Heart left ventricle (tissue), 16 donors: ENCODE measurements at regions of chr12 and their contacts with region 1.

Region 1: GRCh38 chr12:81128930-81129554 is 51.2 kb downstream of the ACSS3 start:
- DNase-seq: peak in 2 of 5 donors; percentile 7 to 24
- ATAC-seq: peak in 3 of 4 donors; percentile 48 to 76 (median 65)
- H3K4me3 ChIP-seq: no peak overlapping the region
- H3K27ac ChIP-seq: no peak overlapping the region
- H3K4me1 ChIP-seq: peaks cover 0 to 5% (median 0%) of the 10 kb centered on the region in 12 donors
- H3K27me3 ChIP-seq: no peaks in the 10 kb centered on the region
- CTCF ChIP-seq: peak; percentile 46 to 75 (median 66)
- POLR2A ChIP-seq: no peak

Region 2: GRCh38 chr12:80412369-80412953 is 716.6 kb before region 1 on chr12:
- intact Hi-C with region 1: loop called in 2 of 10 experiments (anchors 5 to 10 kb)
- DNase-seq: no peak
- ATAC-seq: peak in 1 of 4 donors; percentile 58
- H3K4me3 ChIP-seq: no peak overlapping the region
- H3K27ac ChIP-seq: no peak overlapping the region
- H3K4me1 ChIP-seq: no peaks in the 10 kb centered on the region
- H3K27me3 ChIP-seq: no peaks in the 10 kb centered on the region
- CTCF ChIP-seq: peak; percentile 57 to 80 (median 74)
- POLR2A ChIP-seq: no peak

Region 3: GRCh38 chr12:80837348-80837985 is 291.6 kb before region 1 on chr12:
- intact Hi-C with region 1: loop called in 1 of 10 experiments (anchors 10 kb)
- DNase-seq: peak in 1 of 5 donors; percentile 20
- ATAC-seq: peak; percentile 71 to 94 (median 79)
- H3K4me3 ChIP-seq: no peak overlapping the region
- H3K27ac ChIP-seq: peak overlapping the region in 1 of 12 donors; percentile 32
- H3K4me1 ChIP-seq: peaks cover 0 to 21% (median 7%) of the 10 kb centered on the region in 12 donors
- H3K27me3 ChIP-seq: no peaks in the 10 kb centered on the region
- CTCF ChIP-seq: peak; percentile 51 to 78 (median 68)
- POLR2A ChIP-seq: no peak

Region 4: GRCh38 chr12:80925234-80925633 is 203.8 kb before region 1 on chr12:
- intact Hi-C with region 1: no loop called
- DNase-seq: no peak
- ATAC-seq: peak; percentile 63 to 82 (median 73)
- H3K4me3 ChIP-seq: no peak overlapping the region
- H3K27ac ChIP-seq: peak overlapping the region in 6 of 12 donors; percentile 0 to 34 (median 10)
- H3K4me1 ChIP-seq: peaks cover 0 to 29% (median 7%) of the 10 kb centered on the region in 12 donors
- H3K27me3 ChIP-seq: no peaks in the 10 kb centered on the region
- CTCF ChIP-seq: no peak
- POLR2A ChIP-seq: no peak

Region 5: GRCh38 chr12:81086342-81086741 is 42.7 kb before region 1 on chr12:
- intact Hi-C with region 1: loop called in 1 of 10 experiments (anchors 5 kb)
- DNase-seq: no peak
- ATAC-seq: peak; percentile 72 to 85 (median 76)
- H3K4me3 ChIP-seq: no peak overlapping the region
- H3K27ac ChIP-seq: peak overlapping the region in 5 of 12 donors; percentile 45 to 59 (median 48)
- H3K4me1 ChIP-seq: peaks cover 0 to 47% (median 21%) of the 10 kb centered on the region in 12 donors
- H3K27me3 ChIP-seq: no peaks in the 10 kb centered on the region
- CTCF ChIP-seq: no peak
- POLR2A ChIP-seq: no peak